Activated CD8-positive, alpha-beta memory T cell treated with anti-CD3 and anti-CD28 coated beads, Interleukin-2, amount 10 ng/mL, durations not matched to agents 7 days and 5 days (primary cell): ENCODE measurements at regions of chrX and their contacts with region 1.

Region 1: DNA sequence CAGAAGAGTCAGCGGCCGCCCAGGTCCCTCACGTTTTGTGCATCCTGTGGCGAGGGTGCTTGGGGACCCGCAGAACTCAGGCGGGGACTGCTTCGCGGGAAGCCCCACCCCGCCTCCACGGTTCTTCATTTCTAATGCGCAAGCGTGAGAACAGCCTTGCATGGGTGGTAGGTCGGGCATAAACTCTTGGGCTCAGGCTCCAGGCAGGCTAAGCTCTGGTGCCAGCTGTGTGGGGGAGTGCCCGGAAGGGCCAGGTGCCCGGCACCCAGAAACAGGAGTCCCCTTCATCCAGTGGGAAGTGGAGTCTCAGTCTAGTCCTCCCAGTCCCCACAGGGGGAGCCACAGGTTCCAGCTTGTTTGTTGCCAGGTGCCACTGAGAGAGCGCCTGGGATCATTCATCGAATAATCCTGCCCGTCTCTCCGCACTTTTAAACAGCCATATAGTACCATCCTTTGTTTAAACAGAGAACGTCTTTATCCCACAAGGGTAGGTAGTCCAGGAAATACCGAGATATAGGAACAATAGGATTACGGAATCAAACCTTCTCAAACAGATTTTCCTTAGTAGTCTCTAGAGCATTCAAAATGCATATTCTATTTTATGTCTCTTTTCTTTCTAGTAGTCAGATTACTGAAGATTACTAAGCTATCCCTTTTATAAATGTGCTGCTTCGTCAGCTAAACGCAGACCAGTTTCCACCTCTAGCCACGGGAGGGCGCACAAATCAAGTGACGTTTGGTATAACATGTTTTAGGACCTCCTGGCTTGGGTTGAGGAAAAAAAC is 12.7 kb upstream of the RBBP7 start:
- DNase-seq: peak; percentile 76
- ATAC-seq: peak; percentile 85
- H3K4me3 Mint-ChIP-seq: peak overlapping the region; percentile 71
- H3K27ac Mint-ChIP-seq: peak overlapping the region; percentile 70
- H3K4me1 Mint-ChIP-seq: peaks cover 6% of the 10 kb centered on the region
- H3K27me3 Mint-ChIP-seq: peaks cover 10% of the 10 kb centered on the region

Region 2: DNA sequence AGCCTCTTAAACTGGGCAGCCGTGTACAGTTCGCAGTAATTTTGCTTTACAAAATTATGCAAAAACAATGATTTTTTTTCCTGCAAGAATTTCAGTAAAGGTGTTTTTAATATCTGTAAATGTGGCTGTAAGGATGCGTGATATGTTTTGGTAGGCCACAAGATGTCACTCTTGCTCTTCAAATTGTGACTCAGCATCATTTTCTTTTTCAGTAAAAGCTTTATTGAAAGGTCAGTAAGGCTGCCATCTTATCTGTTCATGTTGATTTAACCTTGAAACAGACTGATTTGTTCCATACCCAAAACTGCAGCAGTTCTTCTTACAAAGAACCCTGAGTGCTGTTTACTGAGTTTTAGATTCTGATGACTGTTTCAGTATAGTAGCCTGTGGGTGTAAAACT is 56.7 kb before region 1 on chrX:
- CTCF ChIA-PET with region 1: interaction called, 22 read pairs
- DNase-seq: no peak
- ATAC-seq: peak; percentile 57
- H3K4me3 Mint-ChIP-seq: no peak overlapping the region
- H3K27ac Mint-ChIP-seq: peak overlapping the region; percentile 63
- H3K4me1 Mint-ChIP-seq: peaks cover 29% of the 10 kb centered on the region
- H3K27me3 Mint-ChIP-seq: no peaks in the 10 kb centered on the region

Region 3: GRCh38 chrX:16870095-16870860 is 12.6 kb before region 1 on chrX and contains the start of gene RBBP7:
- CTCF ChIA-PET with region 1: interaction called, 20 read pairs
- DNase-seq: peak; percentile 92
- ATAC-seq: peak; percentile 88
- H3K4me3 Mint-ChIP-seq: peak within 1 kb of the TSS; percentile 97
- H3K27ac Mint-ChIP-seq: peak within 1 kb of the TSS; percentile 96
- H3K4me1 Mint-ChIP-seq: peaks cover 39% of the 10 kb centered on the region
- H3K27me3 Mint-ChIP-seq: peaks cover 7% of the 10 kb centered on the region
- total RNA-seq, gene RBBP7: 178 to 193 TPM

Region 4: GRCh38 chrX:16903274-16904022 is 20.6 kb after region 1 on chrX:
- CTCF ChIA-PET with region 1: no interaction called
- DNase-seq: no peak
- ATAC-seq: no peak
- H3K4me3 Mint-ChIP-seq: no peak overlapping the region
- H3K27ac Mint-ChIP-seq: no peak overlapping the region
- H3K4me1 Mint-ChIP-seq: no peaks in the 10 kb centered on the region
- H3K27me3 Mint-ChIP-seq: peaks cover 11% of the 10 kb centered on the region

Region 5: DNA sequence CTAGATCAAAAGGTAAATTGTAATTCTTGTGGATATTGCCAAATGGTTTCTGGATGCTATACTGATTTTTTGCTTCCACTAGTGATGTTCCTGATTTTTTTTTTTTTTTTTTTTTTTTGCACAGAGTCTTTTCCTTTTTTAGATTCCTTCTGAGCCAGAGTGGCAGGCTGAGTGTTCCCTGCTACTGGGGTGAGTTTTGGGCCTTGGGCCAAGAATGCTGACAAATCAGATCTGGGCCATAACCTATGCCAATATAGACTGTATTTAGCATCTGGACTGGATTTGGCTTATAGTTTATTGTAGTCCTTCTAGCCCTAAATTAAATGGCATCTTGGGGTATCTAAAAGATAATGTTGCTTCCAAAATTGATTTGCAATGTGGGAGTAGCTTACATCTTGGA is 116.4 kb after region 1 on chrX:
- CTCF ChIA-PET with region 1: no interaction called
- DNase-seq: no peak
- ATAC-seq: no peak
- H3K4me3 Mint-ChIP-seq: no peak overlapping the region
- H3K27ac Mint-ChIP-seq: no peak overlapping the region
- H3K4me1 Mint-ChIP-seq: peaks cover 2% of the 10 kb centered on the region
- H3K27me3 Mint-ChIP-seq: peaks cover 13% of the 10 kb centered on the region

Region 6: GRCh38 chrX:17046478-17047097 is 163.7 kb after region 1 on chrX:
- CTCF ChIA-PET with region 1: interaction called, 22 read pairs
- DNase-seq: peak; percentile 51
- ATAC-seq: peak; percentile 49
- H3K4me3 Mint-ChIP-seq: no peak overlapping the region
- H3K27ac Mint-ChIP-seq: no peak overlapping the region
- H3K4me1 Mint-ChIP-seq: no peaks in the 10 kb centered on the region
- H3K27me3 Mint-ChIP-seq: peaks cover 3% of the 10 kb centered on the region